ENCODE measurements at regions of chr5 and their contacts with region 1.

Region 1: DNA sequence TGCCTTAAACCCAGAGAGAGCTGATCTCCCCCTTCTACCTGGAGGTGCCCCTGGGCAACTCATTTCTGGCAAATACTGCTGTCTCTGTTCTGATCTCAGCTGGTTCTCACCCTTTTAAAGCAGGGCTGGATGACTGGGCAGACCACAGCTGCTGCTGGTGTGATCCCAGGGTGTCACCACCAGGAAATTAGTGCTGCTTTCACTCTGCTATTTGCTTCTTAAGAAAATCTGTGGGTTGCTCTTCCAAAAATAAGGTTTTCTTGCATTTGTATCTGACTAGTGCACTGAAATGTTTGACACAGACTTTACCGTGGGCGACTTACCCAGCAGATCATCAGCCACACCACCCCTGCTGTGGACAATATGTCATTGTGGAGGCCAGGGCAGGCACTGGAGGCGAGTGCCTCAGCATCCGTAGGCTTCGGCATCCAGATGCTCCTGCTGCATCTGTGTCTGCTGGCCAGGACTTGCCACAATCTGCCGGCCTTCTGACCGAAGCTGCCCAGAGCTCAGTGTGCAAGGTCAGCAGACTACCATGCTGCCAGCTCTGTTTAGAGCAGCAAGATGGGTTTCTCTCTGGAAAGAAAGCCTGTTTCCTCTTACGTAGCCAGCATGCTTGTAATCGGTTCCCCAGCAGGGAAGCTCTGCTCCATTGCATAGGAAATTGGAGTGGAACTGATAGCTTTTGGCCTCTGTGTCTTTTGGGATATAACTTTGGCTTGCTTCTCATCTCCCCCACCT is 13.6 kb downstream of the ARHGAP26 start:
- DNase-seq: peak; percentile 35
- H3K4me3 Mint-ChIP-seq: peak overlapping the region; percentile 27
- H3K27ac Mint-ChIP-seq: peak overlapping the region; percentile 86
- H3K4me1 Mint-ChIP-seq: peaks cover 66% of the 10 kb centered on the region
- H3K27me3 Mint-ChIP-seq: no peaks in the 10 kb centered on the region

Region 2: GRCh38 chr5:142713121-142713706 is 70.6 kb before region 1 on chr5:
- intact Hi-C with region 1: loop called (anchors 5 kb)
- DNase-seq: peak; percentile 82
- H3K4me3 Mint-ChIP-seq: peak overlapping the region; percentile 74
- H3K27ac Mint-ChIP-seq: no peak overlapping the region
- H3K4me1 Mint-ChIP-seq: peaks cover 6% of the 10 kb centered on the region
- H3K27me3 Mint-ChIP-seq: peaks cover 17% of the 10 kb centered on the region

Region 3: DNA sequence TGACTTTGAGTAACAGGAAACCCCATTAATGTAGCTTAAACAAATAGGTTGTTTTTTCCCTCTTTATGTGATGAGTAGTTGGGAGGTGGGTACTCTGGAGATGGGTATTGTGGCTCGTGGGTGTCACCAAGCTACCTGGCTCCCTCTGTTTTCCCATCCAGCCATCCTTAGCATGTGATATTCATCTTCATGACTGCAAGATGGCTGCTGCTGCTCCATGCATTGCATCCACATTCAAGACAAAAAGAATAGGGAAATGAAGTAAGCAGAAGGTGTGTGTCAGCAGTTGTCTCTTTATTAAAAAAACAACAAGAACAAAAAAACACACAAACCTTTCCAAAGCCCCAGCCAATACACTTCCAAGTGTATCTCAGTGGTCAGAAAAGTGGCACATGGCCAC is 20.1 kb before region 1 on chr5:
- intact Hi-C with region 1: no loop called
- DNase-seq: no peak
- H3K4me3 Mint-ChIP-seq: no peak overlapping the region
- H3K27ac Mint-ChIP-seq: no peak overlapping the region
- H3K4me1 Mint-ChIP-seq: peaks cover 1% of the 10 kb centered on the region
- H3K27me3 Mint-ChIP-seq: peaks cover 7% of the 10 kb centered on the region

Region 4: GRCh38 chr5:142800776-142801494 is 17.2 kb after region 1 on chr5:
- intact Hi-C with region 1: loop called (anchors 1 kb)
- DNase-seq: peak; percentile 55
- H3K4me3 Mint-ChIP-seq: peak overlapping the region; percentile 64
- H3K27ac Mint-ChIP-seq: peak overlapping the region; percentile 92
- H3K4me1 Mint-ChIP-seq: peaks cover 56% of the 10 kb centered on the region
- H3K27me3 Mint-ChIP-seq: no peaks in the 10 kb centered on the region

Region 5: GRCh38 chr5:142821733-142822487 is 38.1 kb after region 1 on chr5:
- intact Hi-C with region 1: loop called (anchors 1 kb)
- DNase-seq: no peak
- H3K4me3 Mint-ChIP-seq: no peak overlapping the region
- H3K27ac Mint-ChIP-seq: peak overlapping the region; percentile 72
- H3K4me1 Mint-ChIP-seq: peaks cover 69% of the 10 kb centered on the region
- H3K27me3 Mint-ChIP-seq: no peaks in the 10 kb centered on the region

Region 6: GRCh38 chr5:142857405-142857804 is 73.6 kb after region 1 on chr5:
- intact Hi-C with region 1: no loop called
- DNase-seq: no peak
- H3K4me3 Mint-ChIP-seq: no peak overlapping the region
- H3K27ac Mint-ChIP-seq: no peak overlapping the region
- H3K4me1 Mint-ChIP-seq: peaks cover 3% of the 10 kb centered on the region
- H3K27me3 Mint-ChIP-seq: no peaks in the 10 kb centered on the region